HAP-1 (cell line): ENCODE measurements at regions of chr11 and their contacts with region 1.

Region 1: GRCh38 chr11:8699903-8700302 is 17.3 kb downstream of the RPL27A start:
- DNase-seq: peak; percentile 62 to 84
- H3K4me3 ChIP-seq: no peak overlapping the region
- H3K4me1 ChIP-seq: peaks cover 30% of the 10 kb centered on the region
- H3K27me3 ChIP-seq: no peaks in the 10 kb centered on the region

Region 2: DNA sequence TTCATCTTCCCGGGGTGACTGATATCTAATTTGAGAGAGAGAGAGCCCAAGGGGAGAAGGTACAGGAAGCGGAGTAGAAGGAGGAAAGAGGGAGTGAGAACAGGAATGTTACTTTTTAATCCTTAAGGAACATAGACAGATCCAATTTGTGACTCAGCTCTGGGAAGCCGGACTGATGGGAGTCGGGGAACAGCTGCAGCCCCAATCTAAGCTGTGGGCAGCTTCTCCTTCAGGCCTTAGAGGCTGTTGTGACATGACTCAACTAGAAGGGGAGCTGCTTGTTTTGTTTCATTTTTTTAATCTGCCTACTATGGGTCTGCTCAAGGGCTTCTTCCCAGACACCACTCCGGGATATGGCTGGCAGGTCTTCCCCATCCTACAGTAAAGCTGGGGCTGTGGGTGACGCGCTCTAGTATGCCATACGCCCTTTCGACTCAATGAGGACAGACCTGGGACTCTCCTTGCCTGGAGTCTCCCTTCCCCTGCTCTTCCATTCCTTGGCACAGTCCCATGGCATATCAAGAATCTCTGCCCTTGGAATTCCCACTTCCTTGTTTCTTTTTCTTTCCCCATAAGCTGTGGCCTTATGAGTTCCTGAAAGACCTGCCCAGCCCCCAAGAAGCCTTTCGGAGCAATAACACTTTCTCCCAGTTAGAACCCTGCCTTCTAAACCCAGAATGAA is 107.8 kb after region 1 on chr11:
- in situ Hi-C with region 1: loop called (anchors 10 kb)
- DNase-seq: no peak
- H3K4me3 ChIP-seq: no peak overlapping the region
- H3K4me1 ChIP-seq: no peaks in the 10 kb centered on the region
- H3K27me3 ChIP-seq: no peaks in the 10 kb centered on the region